ENCODE measurements at regions of chr4 and their contacts with region 1.

Region 1: GRCh38 chr4:68271851-68272756 is 26.6 kb upstream of the TMPRSS11B start:
- DNase-seq: peak; percentile 32
- ATAC-seq: peak; percentile 82
- H3K4me3 Mint-ChIP-seq: peak overlapping the region; percentile 68
- H3K27ac Mint-ChIP-seq: peak overlapping the region; percentile 97
- H3K4me1 Mint-ChIP-seq: peaks cover 35% of the 10 kb centered on the region
- H3K27me3 Mint-ChIP-seq: 0 out of 2 replicates have a peak, but pooled peaks cover 6% of the 10 kb centered on the region
- CTCF ChIP-seq: peak; percentile 63

Region 2: GRCh38 chr4:67909905-67910584 is 362.1 kb before region 1 on chr4:
- CTCF ChIA-PET with region 1: no interaction called
- POLR2A ChIA-PET with region 1: no interaction called
- DNase-seq: no peak
- ATAC-seq: no peak
- H3K4me3 Mint-ChIP-seq: no peak overlapping the region
- H3K27ac Mint-ChIP-seq: no peak overlapping the region
- H3K4me1 Mint-ChIP-seq: no peaks in the 10 kb centered on the region
- H3K27me3 Mint-ChIP-seq: no peaks in the 10 kb centered on the region
- CTCF ChIP-seq: peak; percentile 80

Region 3: DNA sequence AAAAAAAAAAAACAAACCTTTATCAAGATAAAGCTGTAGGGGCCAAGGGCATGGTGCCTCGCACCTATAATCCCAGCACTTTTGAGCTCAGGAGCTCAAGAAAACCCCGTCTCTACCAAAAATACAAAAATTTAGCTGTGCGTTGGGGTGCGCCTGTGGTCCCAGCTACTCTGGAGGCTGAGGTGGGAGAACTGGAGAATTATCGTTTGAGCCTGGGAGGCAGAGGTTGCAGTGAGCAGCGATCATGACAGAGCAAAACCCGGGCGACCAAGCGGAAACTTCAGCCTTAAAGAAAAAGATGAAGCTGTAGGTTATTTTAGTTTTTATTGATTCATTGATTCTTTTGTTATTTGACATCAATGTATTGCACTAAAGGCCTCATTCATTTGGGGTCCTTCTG is 147.9 kb before region 1 on chr4:
- CTCF ChIA-PET with region 1: no interaction called
- POLR2A ChIA-PET with region 1: no interaction called
- DNase-seq: no peak
- ATAC-seq: peak; percentile 19
- H3K4me3 Mint-ChIP-seq: no peak overlapping the region
- H3K27ac Mint-ChIP-seq: peak overlapping the region; percentile 70; the same call in 1 of the 2 replicates
- H3K4me1 Mint-ChIP-seq: peaks cover 39% of the 10 kb centered on the region
- H3K27me3 Mint-ChIP-seq: no peaks in the 10 kb centered on the region; the same call in 1 of the 2 replicates
- CTCF ChIP-seq: no peak

Region 4: GRCh38 chr4:68183417-68183816 is 88.7 kb before region 1 on chr4:
- CTCF ChIA-PET with region 1: no interaction called
- POLR2A ChIA-PET with region 1: no interaction called
- DNase-seq: no peak
- ATAC-seq: no peak
- H3K4me3 Mint-ChIP-seq: no peak overlapping the region
- H3K27ac Mint-ChIP-seq: no peak overlapping the region
- H3K4me1 Mint-ChIP-seq: no peaks in the 10 kb centered on the region
- H3K27me3 Mint-ChIP-seq: no peaks in the 10 kb centered on the region
- CTCF ChIP-seq: no peak

Region 5: DNA sequence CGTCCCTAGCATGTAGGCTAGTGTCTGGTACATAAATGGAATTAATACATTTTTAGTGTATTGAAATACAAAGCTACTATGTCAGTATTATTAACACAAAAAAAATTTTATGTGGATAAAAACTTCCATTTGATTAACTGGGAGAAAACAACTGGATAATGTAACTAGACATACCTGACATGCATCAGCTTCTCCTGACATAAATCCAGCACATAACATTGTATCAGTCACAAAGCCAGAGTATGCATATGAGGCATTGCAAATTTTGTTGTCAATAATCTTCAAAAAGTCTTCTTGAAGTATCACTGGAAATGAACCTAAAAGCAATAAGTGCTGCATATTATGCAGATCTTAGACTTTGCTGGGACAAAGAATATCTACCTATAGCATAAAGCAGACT is 43.5 kb before region 1 on chr4:
- CTCF ChIA-PET with region 1: no interaction called
- POLR2A ChIA-PET with region 1: no interaction called
- DNase-seq: no peak
- ATAC-seq: no peak
- H3K4me3 Mint-ChIP-seq: no peak overlapping the region
- H3K27ac Mint-ChIP-seq: no peak overlapping the region
- H3K4me1 Mint-ChIP-seq: no peaks in the 10 kb centered on the region
- H3K27me3 Mint-ChIP-seq: no peaks in the 10 kb centered on the region
- CTCF ChIP-seq: no peak

Region 6: GRCh38 chr4:68342134-68342533 is 70.0 kb after region 1 on chr4:
- CTCF ChIA-PET with region 1: interaction called, 11 read pairs
- POLR2A ChIA-PET with region 1: no interaction called
- DNase-seq: no peak
- ATAC-seq: peak; percentile 43
- H3K4me3 Mint-ChIP-seq: peak overlapping the region; percentile 8
- H3K27ac Mint-ChIP-seq: peak overlapping the region; percentile 8
- H3K4me1 Mint-ChIP-seq: peaks cover 62% of the 10 kb centered on the region
- H3K27me3 Mint-ChIP-seq: no peaks in the 10 kb centered on the region
- CTCF ChIP-seq: no peak

Measured in WTC11 (cell line).